Activated CD4-positive, alpha-beta memory T cell treated with anti-CD3 and anti-CD28 coated beads for 36 hours (primary cell): ENCODE measurements at regions of chr17 and their contacts with region 1.

Region 1: DNA sequence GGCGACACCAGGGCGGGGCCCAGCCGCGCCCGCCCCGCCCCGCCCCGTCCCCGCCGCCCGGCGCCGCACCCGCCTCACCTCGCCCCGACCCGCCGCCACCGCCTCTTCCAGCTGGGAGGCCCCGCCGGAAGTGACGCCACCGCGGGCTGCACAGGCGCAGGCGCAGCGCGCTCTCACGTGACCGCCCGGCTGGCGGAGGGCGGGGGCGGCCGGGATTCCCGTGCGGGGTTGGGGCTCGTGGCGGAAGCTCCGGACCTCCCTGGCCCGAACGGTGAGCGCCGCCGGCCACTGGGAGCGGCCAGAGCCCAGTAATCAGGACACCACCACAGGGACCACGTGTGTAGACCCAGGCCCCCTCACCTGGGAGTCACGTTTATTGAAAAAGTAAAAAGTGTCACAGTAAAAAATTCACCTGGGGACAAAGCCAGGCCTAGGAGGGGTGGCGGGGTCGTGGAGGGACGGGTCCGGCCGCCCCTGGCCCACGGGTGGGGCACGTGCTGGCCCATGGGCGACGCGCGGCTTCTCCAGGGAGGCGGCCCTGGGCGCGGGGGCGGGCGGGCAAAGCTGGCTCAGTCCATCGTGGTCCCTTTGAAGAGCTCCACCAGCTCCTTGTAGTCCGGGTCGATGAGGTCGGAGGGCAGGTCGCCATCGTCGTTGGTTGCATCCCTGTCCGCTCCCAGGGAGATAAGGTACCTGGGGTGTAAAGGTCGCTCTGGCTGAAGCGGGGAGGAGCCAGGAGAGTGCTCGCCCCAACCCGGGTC is at the start of gene MCRIP1:
- DNase-seq: peak; percentile 97
- H3K4me3 Mint-ChIP-seq: peak within 1 kb of the TSS; percentile 97
- H3K27ac Mint-ChIP-seq: peak within 1 kb of the TSS; percentile 96
- H3K4me1 Mint-ChIP-seq: peaks cover 20% of the 10 kb centered on the region
- H3K27me3 Mint-ChIP-seq: no peaks in the 10 kb centered on the region
- total RNA-seq, gene MCRIP1: 67.4 to 68.3 TPM

Region 2: GRCh38 chr17:81845881-81846742 is 12.8 kb after region 1 on chr17:
- CTCF ChIA-PET with region 1: no interaction called
- POLR2A ChIA-PET with region 1: interaction called, 3 read pairs
- intact Hi-C with region 1: loop called (anchors 1 kb)
- DNase-seq: no peak
- H3K4me3 Mint-ChIP-seq: no peak overlapping the region
- H3K27ac Mint-ChIP-seq: no peak overlapping the region
- H3K4me1 Mint-ChIP-seq: no peaks in the 10 kb centered on the region
- H3K27me3 Mint-ChIP-seq: no peaks in the 10 kb centered on the region

Region 3: GRCh38 chr17:82205719-82206508 is 372.6 kb after region 1 on chr17:
- CTCF ChIA-PET with region 1: no interaction called
- POLR2A ChIA-PET with region 1: no interaction called
- intact Hi-C with region 1: no loop called
- DNase-seq: peak; percentile 89
- H3K4me3 Mint-ChIP-seq: peak overlapping the region; percentile 63
- H3K27ac Mint-ChIP-seq: peak overlapping the region; percentile 93
- H3K4me1 Mint-ChIP-seq: peaks cover 53% of the 10 kb centered on the region
- H3K27me3 Mint-ChIP-seq: no peaks in the 10 kb centered on the region